ENCODE measurements at regions of chr12 and their contacts with region 1.

Region 1: DNA sequence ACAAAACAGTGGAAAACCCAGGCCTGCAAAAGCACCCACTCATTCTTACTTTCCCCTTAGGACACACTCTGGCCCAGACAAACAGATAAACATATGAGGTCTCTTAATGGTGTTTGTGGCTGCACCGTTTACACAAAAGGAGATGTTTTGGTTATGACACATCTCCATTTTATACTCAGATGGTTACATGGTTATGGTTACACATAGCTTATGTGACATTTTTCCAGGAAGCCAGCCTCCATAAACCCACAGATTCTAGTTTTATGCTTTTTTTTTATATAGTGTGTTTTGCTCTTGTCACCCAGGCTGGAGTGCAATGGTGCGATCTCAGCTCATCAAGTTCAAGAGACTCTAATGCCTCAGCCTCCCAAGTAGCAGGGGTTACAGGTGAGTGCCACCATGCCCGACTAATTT is 3.5 kb upstream of the KLRD1 start:
- DNase-seq: peak; percentile 18
- H3K4me3 Mint-ChIP-seq: no peak overlapping the region
- H3K27ac Mint-ChIP-seq: peak overlapping the region; percentile 34
- H3K4me1 Mint-ChIP-seq: peaks cover 49% of the 10 kb centered on the region
- H3K27me3 Mint-ChIP-seq: peaks cover 7% of the 10 kb centered on the region

Region 2: GRCh38 chr12:9027161-9028059 is 1276.8 kb before region 1 on chr12:
- intact Hi-C with region 1: loop called (anchors 5 kb)
- DNase-seq: no peak
- H3K4me3 Mint-ChIP-seq: no peak overlapping the region
- H3K27ac Mint-ChIP-seq: peak overlapping the region; percentile 91
- H3K4me1 Mint-ChIP-seq: peaks cover 22% of the 10 kb centered on the region
- H3K27me3 Mint-ChIP-seq: no peaks in the 10 kb centered on the region

Region 3: GRCh38 chr12:9869307-9870161 is 434.6 kb before region 1 on chr12 and contains the start of gene CLEC2B:
- intact Hi-C with region 1: loop called (anchors 5 kb)
- DNase-seq: peak; percentile 26
- H3K4me3 Mint-ChIP-seq: peak within 1 kb of the TSS; percentile 85
- H3K27ac Mint-ChIP-seq: peak within 1 kb of the TSS; percentile 91
- H3K4me1 Mint-ChIP-seq: peaks cover 29% of the 10 kb centered on the region
- H3K27me3 Mint-ChIP-seq: no peaks in the 10 kb centered on the region
- total RNA-seq, gene CLEC2B: 5.0 and 5.1 TPM in 2 replicates

Region 4: GRCh38 chr12:10190558-10191388 is 113.4 kb before region 1 on chr12:
- intact Hi-C with region 1: no loop called
- DNase-seq: peak; percentile 18
- H3K4me3 Mint-ChIP-seq: no peak overlapping the region
- H3K27ac Mint-ChIP-seq: no peak overlapping the region
- H3K4me1 Mint-ChIP-seq: peaks cover 2% of the 10 kb centered on the region
- H3K27me3 Mint-ChIP-seq: peaks cover 35% of the 10 kb centered on the region

Region 5: GRCh38 chr12:10243818-10244520 is 60.2 kb before region 1 on chr12:
- intact Hi-C with region 1: loop called (anchors 2 kb)
- DNase-seq: no peak
- H3K4me3 Mint-ChIP-seq: peak overlapping the region; percentile 65
- H3K27ac Mint-ChIP-seq: no peak overlapping the region
- H3K4me1 Mint-ChIP-seq: peaks cover 29% of the 10 kb centered on the region
- H3K27me3 Mint-ChIP-seq: peaks cover 23% of the 10 kb centered on the region

Region 6: GRCh38 chr12:10320643-10321042 is 16.5 kb after region 1 on chr12:
- intact Hi-C with region 1: loop called (anchors 1 kb)
- DNase-seq: no peak
- H3K4me3 Mint-ChIP-seq: no peak overlapping the region
- H3K27ac Mint-ChIP-seq: peak overlapping the region; percentile 77
- H3K4me1 Mint-ChIP-seq: peaks cover 37% of the 10 kb centered on the region
- H3K27me3 Mint-ChIP-seq: peaks cover 3% of the 10 kb centered on the region

Region 7: GRCh38 chr12:10540776-10541205 is 236.6 kb after region 1 on chr12:
- intact Hi-C with region 1: loop called (anchors 1 kb)
- DNase-seq: no peak
- H3K4me3 Mint-ChIP-seq: no peak overlapping the region
- H3K27ac Mint-ChIP-seq: peak overlapping the region; percentile 57
- H3K4me1 Mint-ChIP-seq: peaks cover 8% of the 10 kb centered on the region
- H3K27me3 Mint-ChIP-seq: peaks cover 22% of the 10 kb centered on the region